Activated T-helper 1 cell treated with anti-CD3 and anti-CD28 coated beads, Interleukin-12 subunit alpha, Interleukin-12 subunit beta, Interleukin-2, Interleukin-4 antibody, amounts not matched to agents 30 ng/mL and 10 ng/mL and 1 ng/mL, durations not matched to agents 14 hours and 24 hours and 36 hours (primary cell): ENCODE measurements at regions of chr5 and their contacts with region 1.

Region 1: GRCh38 chr5:168219515-168220410 is 71.7 kb upstream of the WWC1 start:
- DNase-seq: peak; percentile 20
- H3K4me3 Mint-ChIP-seq: no peak overlapping the region
- H3K27ac Mint-ChIP-seq: no peak overlapping the region
- H3K4me1 Mint-ChIP-seq: no peaks in the 10 kb centered on the region
- H3K27me3 Mint-ChIP-seq: peaks cover 22% of the 10 kb centered on the region

Region 2: DNA sequence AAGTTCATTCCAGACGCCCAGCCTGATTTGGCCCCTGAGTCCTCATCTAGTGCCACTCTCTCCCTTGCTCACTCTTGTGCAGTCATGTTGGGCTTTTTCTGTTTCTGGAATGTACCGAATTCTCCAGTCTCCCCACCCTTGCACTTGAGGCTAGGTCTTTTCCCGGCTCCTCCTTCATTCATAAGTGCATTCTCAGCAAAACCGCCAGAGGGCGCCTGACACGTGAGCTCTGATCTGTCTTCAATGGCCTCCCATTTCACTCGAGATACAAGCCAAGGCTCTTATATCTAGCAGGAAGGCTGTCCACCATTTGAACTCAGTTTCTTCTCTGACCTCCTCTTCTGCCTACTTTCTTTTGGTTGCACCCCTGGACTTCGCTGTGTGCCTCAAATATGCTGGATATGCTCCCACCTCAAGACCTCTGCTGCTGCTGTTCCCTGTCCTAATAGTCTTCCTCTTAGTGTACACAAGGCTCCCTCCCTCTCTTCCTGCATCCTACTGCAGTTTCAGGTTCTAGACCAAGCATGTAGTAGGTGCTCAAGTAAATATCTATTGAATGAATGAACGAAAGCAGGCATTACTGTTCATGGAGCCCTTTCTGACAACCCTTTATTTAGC is 496.4 kb before region 1 on chr5:
- intact Hi-C with region 1: loop called (anchors 1 kb)
- DNase-seq: peak; percentile 30
- H3K4me3 Mint-ChIP-seq: no peak overlapping the region
- H3K27ac Mint-ChIP-seq: no peak overlapping the region
- H3K4me1 Mint-ChIP-seq: peaks cover 6% of the 10 kb centered on the region
- H3K27me3 Mint-ChIP-seq: no peaks in the 10 kb centered on the region

Region 3: DNA sequence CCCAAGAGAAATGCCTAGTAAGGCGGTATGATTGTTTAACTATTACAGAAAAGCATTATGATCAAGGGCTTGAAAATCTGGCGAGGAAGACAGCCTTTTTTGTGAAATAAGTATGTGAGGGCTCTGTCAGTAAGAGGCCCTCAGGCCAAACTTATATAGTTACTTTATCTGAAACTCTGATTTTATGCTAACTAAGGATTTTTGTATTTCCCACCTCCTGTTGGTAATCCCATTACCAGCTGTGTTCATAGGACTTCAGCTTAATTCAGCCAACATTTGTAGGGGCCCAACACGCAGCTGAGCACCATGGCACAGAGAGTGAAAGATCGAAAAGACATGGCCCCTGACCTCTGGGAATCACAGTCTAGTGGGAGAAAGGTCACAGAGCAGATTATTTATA is 246.6 kb before region 1 on chr5:
- intact Hi-C with region 1: no loop called
- DNase-seq: no peak
- H3K4me3 Mint-ChIP-seq: no peak overlapping the region
- H3K27ac Mint-ChIP-seq: no peak overlapping the region
- H3K4me1 Mint-ChIP-seq: no peaks in the 10 kb centered on the region
- H3K27me3 Mint-ChIP-seq: no peaks in the 10 kb centered on the region

Region 4: DNA sequence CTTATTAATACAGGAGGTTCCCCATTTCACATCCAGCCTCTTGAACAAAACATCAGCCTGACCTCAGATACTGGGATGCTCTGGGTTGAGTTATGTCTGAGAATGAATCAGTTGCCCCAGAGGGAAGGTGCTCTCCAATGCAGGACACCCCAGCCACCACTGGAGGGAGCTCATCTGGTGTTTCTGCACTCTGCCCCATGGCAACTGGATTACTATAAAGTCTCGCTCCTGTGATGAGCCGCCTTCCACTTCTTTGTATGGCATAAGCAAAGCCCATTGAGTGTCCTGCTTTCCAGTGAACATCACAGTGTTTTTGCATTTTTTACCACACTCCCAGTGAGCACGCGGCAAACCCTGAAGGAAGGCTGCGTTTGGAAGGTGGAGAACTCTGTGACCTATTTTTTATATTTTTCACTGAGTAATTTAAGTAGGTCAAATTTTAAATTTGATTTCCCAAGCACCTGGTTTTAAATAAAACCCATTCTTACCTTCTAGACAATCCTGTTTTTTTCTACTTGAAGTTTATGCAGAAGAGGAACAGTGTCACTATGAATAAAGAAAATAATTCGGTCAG is 105.2 kb before region 1 on chr5:
- intact Hi-C with region 1: loop called (anchors 1 kb)
- DNase-seq: peak; percentile 11
- H3K4me3 Mint-ChIP-seq: no peak overlapping the region
- H3K27ac Mint-ChIP-seq: no peak overlapping the region
- H3K4me1 Mint-ChIP-seq: no peaks in the 10 kb centered on the region
- H3K27me3 Mint-ChIP-seq: peaks cover 1% of the 10 kb centered on the region

Region 5: GRCh38 chr5:168244838-168245559 is 25.2 kb after region 1 on chr5:
- intact Hi-C with region 1: no loop called
- DNase-seq: no peak
- H3K4me3 Mint-ChIP-seq: no peak overlapping the region
- H3K27ac Mint-ChIP-seq: no peak overlapping the region
- H3K4me1 Mint-ChIP-seq: no peaks in the 10 kb centered on the region
- H3K27me3 Mint-ChIP-seq: no peaks in the 10 kb centered on the region